ENCODE measurements at regions of chr6 and their contacts with region 1.

Region 1: GRCh38 chr6:51855310-51856082 is 231.9 kb downstream of the PKHD1 start:
- DNase-seq: peak; percentile 79
- H3K4me3 ChIP-seq: no peak overlapping the region
- H3K27ac ChIP-seq: no peak overlapping the region
- H3K4me1 ChIP-seq: no peaks in the 10 kb centered on the region
- CTCF ChIP-seq: peak; percentile 95

Region 2: DNA sequence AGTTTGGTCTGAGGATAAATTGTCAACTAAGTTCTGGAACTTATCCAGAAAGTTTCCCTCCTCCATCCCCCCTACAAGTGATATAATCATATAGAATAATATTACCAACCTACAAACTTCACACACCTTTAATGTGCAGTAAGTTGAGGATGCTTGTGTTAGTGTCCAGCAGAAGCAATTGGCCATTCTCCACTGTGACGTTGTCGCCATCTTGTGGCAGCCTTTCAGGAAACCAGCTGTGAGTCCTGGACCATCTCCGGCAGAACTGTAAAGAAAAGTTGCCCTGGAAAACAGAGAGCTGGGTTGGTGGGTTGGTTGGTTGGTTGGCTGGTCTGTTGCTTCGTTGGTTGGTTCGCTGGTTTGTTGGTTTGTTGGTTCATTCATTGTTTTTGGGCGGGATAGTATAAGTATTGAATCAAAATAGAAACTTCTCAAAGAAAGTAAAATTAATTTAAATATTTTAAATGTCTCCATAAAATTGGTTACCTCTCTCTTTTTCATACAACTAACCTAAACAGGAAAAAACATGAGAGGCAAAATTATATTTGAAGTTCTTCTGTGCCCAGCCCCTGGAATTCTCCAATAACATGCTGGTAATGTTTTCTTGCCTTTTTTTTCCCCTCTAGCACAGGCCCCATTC is 104.4 kb after region 1 on chr6:
- CTCF ChIA-PET with region 1: no interaction called
- POLR2A ChIA-PET with region 1: no interaction called
- intact Hi-C with region 1: loop called (anchors 10 kb)
- DNase-seq: peak; percentile 55
- H3K4me3 ChIP-seq: no peak overlapping the region
- H3K27ac ChIP-seq: no peak overlapping the region
- H3K4me1 ChIP-seq: no peaks in the 10 kb centered on the region
- CTCF ChIP-seq: peak; percentile 91

Region 3: DNA sequence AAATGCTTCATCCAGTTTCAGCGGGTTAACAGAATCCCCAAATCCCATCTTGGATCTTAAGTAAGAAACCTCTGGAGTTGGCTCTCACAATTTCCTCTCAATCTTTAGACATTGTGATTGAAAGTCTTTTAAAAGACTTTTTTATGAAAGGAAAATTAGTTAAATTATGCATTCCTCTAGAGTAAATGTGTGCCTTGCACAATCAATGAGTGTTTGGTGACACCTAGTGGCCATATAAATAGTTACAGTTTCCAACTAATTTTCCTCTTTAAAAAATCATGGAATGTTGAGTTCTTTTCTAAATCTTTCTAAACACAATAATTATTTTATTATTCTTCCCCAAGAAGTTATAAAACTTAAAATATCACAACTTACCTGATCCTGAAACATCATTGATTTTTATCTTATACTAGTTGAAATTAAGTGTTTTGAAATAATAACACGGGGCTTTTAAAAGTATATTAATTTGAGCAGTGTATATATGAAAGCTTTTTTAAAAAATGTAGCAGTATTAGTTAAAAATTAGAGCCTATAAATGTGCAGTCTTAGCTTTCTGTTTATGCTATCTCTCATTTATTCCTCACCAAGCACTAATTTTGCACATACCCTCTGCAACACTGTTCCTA is 165.6 kb after region 1 on chr6:
- CTCF ChIA-PET with region 1: no interaction called
- POLR2A ChIA-PET with region 1: interaction called, 3 read pairs
- intact Hi-C with region 1: loop called (anchors 1 kb)
- DNase-seq: peak; percentile 53
- H3K4me3 ChIP-seq: no peak overlapping the region
- H3K27ac ChIP-seq: no peak overlapping the region
- H3K4me1 ChIP-seq: no peaks in the 10 kb centered on the region
- CTCF ChIP-seq: peak; percentile 97

Measured in OCI-LY7 (cell line).